ENCODE measurements at regions of chr19 and their contacts with region 1.

Region 1: GRCh38 chr19:4723367-4724187 is at the start of gene DPP9:
- DNase-seq: peak; percentile 82 to 93
- H3K4me3 ChIP-seq: peak within 1 kb of the TSS; percentile 56
- H3K27ac ChIP-seq: 0 out of 2 replicates have a peak within 1 kb of the TSS, but pooled peaks have one; percentile 32
- H3K4me1 ChIP-seq: peaks cover 3% of the 10 kb centered on the region; the same call in 1 of the 2 replicates
- H3K27me3 ChIP-seq: no peaks in the 10 kb centered on the region
- CTCF ChIP-seq: no peak
- total RNA-seq, gene DPP9: 83.3 and 85.3 TPM in 2 replicates

Region 2: GRCh38 chr19:4369888-4370260 is 353.7 kb before region 1 on chr19:
- CTCF ChIA-PET with region 1: no interaction called
- POLR2A ChIA-PET with region 1: no interaction called
- intact Hi-C with region 1: loop called (anchors 10 kb)
- DNase-seq: peak in 1 of 2 experiments; percentile 29
- H3K4me3 ChIP-seq: no peak overlapping the region
- H3K27ac ChIP-seq: no peak overlapping the region
- H3K4me1 ChIP-seq: peaks cover 17% of the 10 kb centered on the region
- H3K27me3 ChIP-seq: no peaks in the 10 kb centered on the region
- CTCF ChIP-seq: no peak

Region 3: GRCh38 chr19:4567584-4568071 is 155.9 kb before region 1 on chr19:
- CTCF ChIA-PET with region 1: interaction called, 4 read pairs
- POLR2A ChIA-PET with region 1: no interaction called
- intact Hi-C with region 1: loop called (anchors 5 kb)
- DNase-seq: peak in 1 of 2 experiments; percentile 76
- H3K4me3 ChIP-seq: no peak overlapping the region
- H3K27ac ChIP-seq: no peak overlapping the region
- H3K4me1 ChIP-seq: no peaks in the 10 kb centered on the region
- H3K27me3 ChIP-seq: no peaks in the 10 kb centered on the region
- CTCF ChIP-seq: peak; percentile 81

Region 4: DNA sequence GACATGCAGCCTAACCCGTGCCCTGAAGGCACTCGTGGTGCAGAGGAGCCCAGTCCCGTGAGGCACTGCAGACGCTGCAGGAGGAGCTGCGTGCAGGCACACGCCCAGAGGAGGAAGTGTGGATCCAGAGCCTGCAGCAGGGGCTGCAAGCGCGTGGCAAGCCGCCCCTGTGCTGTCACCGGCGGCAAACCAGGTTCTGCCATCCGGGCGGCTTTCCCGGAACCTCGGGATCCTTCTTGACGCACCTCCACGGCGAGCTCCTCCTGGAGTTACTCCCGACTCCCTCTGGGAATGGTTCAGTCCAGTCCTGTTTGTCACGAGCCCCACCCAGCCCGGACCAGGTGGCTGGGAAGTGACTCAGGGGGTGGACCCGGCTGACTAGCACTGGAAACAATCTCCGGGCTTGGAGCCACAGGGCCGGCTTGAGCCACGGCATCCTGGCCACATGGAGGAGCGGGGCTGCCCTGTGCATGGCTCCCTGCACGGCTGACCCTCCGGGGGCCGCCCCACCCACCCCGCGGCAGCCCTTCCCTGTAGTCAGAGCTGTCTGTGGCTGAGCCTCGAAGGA is 10.1 kb before region 1 on chr19:
- CTCF ChIA-PET with region 1: no interaction called
- POLR2A ChIA-PET with region 1: no interaction called
- intact Hi-C with region 1: loop called (anchors 1 kb)
- DNase-seq: peak; percentile 81 to 94
- H3K4me3 ChIP-seq: no peak overlapping the region
- H3K27ac ChIP-seq: peak overlapping the region; percentile 32; the same call in 1 of the 2 replicates
- H3K4me1 ChIP-seq: peaks cover 16% of the 10 kb centered on the region
- H3K27me3 ChIP-seq: no peaks in the 10 kb centered on the region
- CTCF ChIP-seq: no peak

Region 5: GRCh38 chr19:4791170-4792018 is 67.8 kb after region 1 on chr19 and contains the start of gene FEM1A:
- CTCF ChIA-PET with region 1: interaction called, 18 read pairs
- POLR2A ChIA-PET with region 1: no interaction called
- intact Hi-C with region 1: loop called (anchors 2 kb)
- DNase-seq: peak; percentile 94 to 98
- H3K4me3 ChIP-seq: peak within 1 kb of the TSS; percentile 73
- H3K27ac ChIP-seq: peak within 1 kb of the TSS; percentile 58
- H3K4me1 ChIP-seq: 0 out of 2 replicates have a peak, but pooled peaks cover 8% of the 10 kb centered on the region
- H3K27me3 ChIP-seq: no peaks in the 10 kb centered on the region
- CTCF ChIP-seq: peak; percentile 88
- total RNA-seq, gene FEM1A: 6.5 and 7.0 TPM in 2 replicates

Region 6: GRCh38 chr19:4968462-4969291 is 245.1 kb after region 1 on chr19 and contains the start of gene KDM4B:
- CTCF ChIA-PET with region 1: no interaction called
- POLR2A ChIA-PET with region 1: no interaction called
- intact Hi-C with region 1: no loop called
- DNase-seq: peak; percentile 93 to 98
- H3K4me3 ChIP-seq: peak within 1 kb of the TSS; percentile 62
- H3K27ac ChIP-seq: no peak within 1 kb of the TSS
- H3K4me1 ChIP-seq: peaks cover 31% of the 10 kb centered on the region
- H3K27me3 ChIP-seq: no peaks in the 10 kb centered on the region
- CTCF ChIP-seq: no peak
- total RNA-seq, gene KDM4B: 17.6 and 19.5 TPM in 2 replicates

Region 7: GRCh38 chr19:5031231-5032100 is 307.9 kb after region 1 on chr19:
- CTCF ChIA-PET with region 1: no interaction called
- POLR2A ChIA-PET with region 1: no interaction called
- intact Hi-C with region 1: loop called (anchors 10 kb)
- DNase-seq: peak; percentile 40 to 76
- H3K4me3 ChIP-seq: no peak overlapping the region
- H3K27ac ChIP-seq: no peak overlapping the region
- H3K4me1 ChIP-seq: no peaks in the 10 kb centered on the region
- H3K27me3 ChIP-seq: no peaks in the 10 kb centered on the region
- CTCF ChIP-seq: peak; percentile 89